Mammary epithelial cell (primary cell): ENCODE measurements at regions of chr3 and their contacts with region 1.

Region 1: GRCh38 chr3:51630513-51630912 is 40.5 kb upstream of the TEX264 start:
- DNase-seq: no peak
- H3K4me3 ChIP-seq: no peak overlapping the region
- H3K27ac ChIP-seq: no peak overlapping the region
- H3K4me1 ChIP-seq: no peaks in the 10 kb centered on the region
- H3K27me3 ChIP-seq: no peaks in the 10 kb centered on the region
- CTCF ChIP-seq: no peak

Region 2: DNA sequence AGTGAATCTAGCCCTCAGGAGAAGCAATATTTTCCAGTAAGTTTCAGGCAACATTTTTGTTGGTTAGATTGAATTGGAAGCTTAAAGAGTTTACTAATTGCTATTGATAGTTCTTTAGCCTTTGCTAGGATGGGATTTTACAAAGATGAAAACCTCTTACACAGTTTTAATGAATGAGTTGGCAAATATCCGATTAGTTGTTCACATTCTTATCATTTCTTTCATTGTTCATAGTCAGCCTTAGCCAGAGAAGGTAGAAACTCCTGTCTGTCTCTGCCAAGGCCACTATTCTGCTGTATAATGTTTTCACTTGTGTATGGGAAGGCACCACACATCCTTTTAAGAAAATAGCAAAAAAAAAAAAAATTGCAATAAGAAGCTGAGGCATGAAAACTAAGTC is 467.5 kb before region 1 on chr3:
- CTCF ChIA-PET with region 1: no interaction called
- dilution Hi-C with region 1: no loop called
- in situ Hi-C with region 1: no loop called
- intact Hi-C with region 1: no loop called
- DNase-seq: peak; percentile 1
- H3K4me3 ChIP-seq: no peak overlapping the region
- H3K27ac ChIP-seq: no peak overlapping the region
- H3K4me1 ChIP-seq: no peaks in the 10 kb centered on the region
- H3K27me3 ChIP-seq: no peaks in the 10 kb centered on the region
- CTCF ChIP-seq: no peak

Region 3: GRCh38 chr3:51530490-51530889 is 100.0 kb before region 1 on chr3:
- CTCF ChIA-PET with region 1: no interaction called
- dilution Hi-C with region 1: loop called (anchors 5 kb)
- in situ Hi-C with region 1: no loop called
- intact Hi-C with region 1: no loop called
- DNase-seq: no peak
- H3K4me3 ChIP-seq: no peak overlapping the region
- H3K27ac ChIP-seq: no peak overlapping the region
- H3K4me1 ChIP-seq: no peaks in the 10 kb centered on the region
- H3K27me3 ChIP-seq: no peaks in the 10 kb centered on the region
- CTCF ChIP-seq: no peak

Region 4: DNA sequence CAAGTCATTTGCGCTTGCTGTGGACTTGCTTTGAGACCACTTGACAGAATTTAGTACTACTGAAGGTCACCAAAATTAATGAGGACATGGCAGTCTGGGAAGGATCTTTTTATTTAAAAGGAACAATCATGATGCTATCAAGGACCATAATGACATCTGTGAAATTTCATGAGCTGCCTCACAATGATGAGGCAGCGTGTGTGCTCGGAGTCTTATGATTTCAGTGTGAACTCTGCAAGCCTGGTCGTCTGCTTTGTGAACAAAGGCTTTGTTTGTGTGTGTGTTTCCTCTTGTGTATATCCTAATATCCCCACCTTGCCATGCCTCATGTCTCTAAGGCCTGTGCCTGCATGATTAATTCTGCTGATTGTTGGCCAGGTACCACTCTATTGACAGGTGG is 45.3 kb before region 1 on chr3:
- CTCF ChIA-PET with region 1: no interaction called
- dilution Hi-C with region 1: loop called (anchors 5 kb)
- in situ Hi-C with region 1: no loop called
- intact Hi-C with region 1: no loop called
- DNase-seq: peak; percentile 2
- H3K4me3 ChIP-seq: no peak overlapping the region
- H3K27ac ChIP-seq: no peak overlapping the region
- H3K4me1 ChIP-seq: no peaks in the 10 kb centered on the region
- H3K27me3 ChIP-seq: no peaks in the 10 kb centered on the region
- CTCF ChIP-seq: no peak